ENCODE measurements at regions of chr12 and their contacts with region 1.

Region 1: DNA sequence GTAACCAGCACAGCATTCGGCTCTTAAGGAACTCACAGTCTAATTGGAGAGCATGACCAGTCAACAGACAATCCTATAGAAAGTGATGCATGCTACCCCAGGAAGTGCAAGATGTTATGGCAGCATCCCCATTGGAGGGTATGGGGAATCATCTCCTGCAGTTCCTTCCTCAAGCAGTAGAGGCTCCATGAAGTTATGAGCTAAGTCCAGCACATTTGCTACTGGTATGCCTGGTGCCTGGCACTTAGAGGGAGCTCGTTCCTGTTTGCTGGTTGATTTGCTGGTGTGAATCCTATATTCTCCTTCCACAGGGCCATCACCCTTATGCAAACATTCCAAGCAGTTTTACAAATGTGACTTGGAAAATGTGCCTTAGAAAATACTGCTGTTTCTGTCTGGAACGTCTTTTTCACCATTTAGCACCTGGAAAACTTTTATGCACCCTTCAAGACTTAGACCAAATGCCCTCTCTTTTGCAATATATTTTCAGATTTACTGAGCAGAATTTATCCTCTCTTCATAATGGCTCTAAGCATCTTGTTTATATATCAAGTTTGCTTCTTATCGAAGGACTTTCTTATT is 136.1 kb upstream of the WSCD2 start:
- DNase-seq: peak; percentile 22
- ATAC-seq: peak; percentile 91
- H3K4me3 ChIP-seq: no peak overlapping the region
- H3K27ac ChIP-seq: no peak overlapping the region
- H3K4me1 ChIP-seq: no peaks in the 10 kb centered on the region
- H3K27me3 ChIP-seq: peaks cover 2% of the 10 kb centered on the region; the same call in 1 of the 2 replicates
- CTCF ChIP-seq: peak; percentile 71

Region 2: GRCh38 chr12:107788690-107789458 is 204.1 kb before region 1 on chr12:
- CTCF ChIA-PET with region 1: no interaction called
- POLR2A ChIA-PET with region 1: no interaction called
- in situ Hi-C with region 1: no loop called
- intact Hi-C with region 1: no loop called
- DNase-seq: no peak
- ATAC-seq: no peak
- H3K4me3 ChIP-seq: no peak overlapping the region
- H3K27ac ChIP-seq: no peak overlapping the region
- H3K4me1 ChIP-seq: no peaks in the 10 kb centered on the region
- H3K27me3 ChIP-seq: peaks cover 3% of the 10 kb centered on the region; the same call in 1 of the 2 replicates
- CTCF ChIP-seq: no peak

Region 3: GRCh38 chr12:107978201-107978600 is 14.8 kb before region 1 on chr12:
- CTCF ChIA-PET with region 1: no interaction called
- POLR2A ChIA-PET with region 1: no interaction called
- in situ Hi-C with region 1: no loop called
- intact Hi-C with region 1: no loop called
- DNase-seq: no peak
- ATAC-seq: no peak
- H3K4me3 ChIP-seq: no peak overlapping the region
- H3K27ac ChIP-seq: no peak overlapping the region
- H3K4me1 ChIP-seq: no peaks in the 10 kb centered on the region
- H3K27me3 ChIP-seq: peaks cover 3% of the 10 kb centered on the region; the same call in 1 of the 2 replicates
- CTCF ChIP-seq: no peak

Region 4: DNA sequence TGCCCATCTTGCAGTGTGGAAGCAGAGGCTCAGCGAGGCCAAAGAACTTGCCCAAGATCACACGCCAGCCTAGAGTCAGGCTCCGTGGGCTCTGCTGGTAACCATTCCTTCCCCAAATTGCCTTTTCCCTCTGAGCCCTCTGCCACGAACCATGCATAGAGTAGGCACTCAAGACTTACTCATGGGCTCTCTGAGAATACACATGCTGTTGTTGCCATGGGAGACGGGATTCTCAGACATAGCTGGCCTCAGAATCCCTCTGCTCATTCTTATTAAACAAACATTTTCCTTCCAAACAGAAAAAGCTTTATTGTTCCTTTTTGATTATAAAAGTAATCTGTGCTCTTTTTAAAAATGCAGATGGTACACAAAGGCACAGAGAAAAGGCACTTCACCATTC is 83.6 kb after region 1 on chr12:
- CTCF ChIA-PET with region 1: no interaction called
- POLR2A ChIA-PET with region 1: no interaction called
- in situ Hi-C with region 1: no loop called
- intact Hi-C with region 1: no loop called
- DNase-seq: no peak
- ATAC-seq: no peak
- H3K4me3 ChIP-seq: no peak overlapping the region
- H3K27ac ChIP-seq: no peak overlapping the region
- H3K4me1 ChIP-seq: no peaks in the 10 kb centered on the region
- H3K27me3 ChIP-seq: no peaks in the 10 kb centered on the region
- CTCF ChIP-seq: no peak

Region 5: GRCh38 chr12:108270035-108270848 is 277.3 kb after region 1 on chr12:
- CTCF ChIA-PET with region 1: no interaction called
- POLR2A ChIA-PET with region 1: no interaction called
- in situ Hi-C with region 1: no loop called
- intact Hi-C with region 1: no loop called
- DNase-seq: no peak
- ATAC-seq: no peak
- H3K4me3 ChIP-seq: no peak overlapping the region
- H3K27ac ChIP-seq: no peak overlapping the region
- H3K4me1 ChIP-seq: no peaks in the 10 kb centered on the region
- H3K27me3 ChIP-seq: peaks cover 6% of the 10 kb centered on the region
- CTCF ChIP-seq: no peak

Region 6: GRCh38 chr12:108457006-108457733 is 464.2 kb after region 1 on chr12:
- CTCF ChIA-PET with region 1: no interaction called
- POLR2A ChIA-PET with region 1: no interaction called
- in situ Hi-C with region 1: no loop called
- intact Hi-C with region 1: loop called (anchors 10 kb)
- DNase-seq: peak; percentile 7
- ATAC-seq: peak; percentile 92
- H3K4me3 ChIP-seq: no peak overlapping the region
- H3K27ac ChIP-seq: no peak overlapping the region
- H3K4me1 ChIP-seq: no peaks in the 10 kb centered on the region
- H3K27me3 ChIP-seq: peaks cover 13% of the 10 kb centered on the region
- CTCF ChIP-seq: peak; percentile 82

Region 7: DNA sequence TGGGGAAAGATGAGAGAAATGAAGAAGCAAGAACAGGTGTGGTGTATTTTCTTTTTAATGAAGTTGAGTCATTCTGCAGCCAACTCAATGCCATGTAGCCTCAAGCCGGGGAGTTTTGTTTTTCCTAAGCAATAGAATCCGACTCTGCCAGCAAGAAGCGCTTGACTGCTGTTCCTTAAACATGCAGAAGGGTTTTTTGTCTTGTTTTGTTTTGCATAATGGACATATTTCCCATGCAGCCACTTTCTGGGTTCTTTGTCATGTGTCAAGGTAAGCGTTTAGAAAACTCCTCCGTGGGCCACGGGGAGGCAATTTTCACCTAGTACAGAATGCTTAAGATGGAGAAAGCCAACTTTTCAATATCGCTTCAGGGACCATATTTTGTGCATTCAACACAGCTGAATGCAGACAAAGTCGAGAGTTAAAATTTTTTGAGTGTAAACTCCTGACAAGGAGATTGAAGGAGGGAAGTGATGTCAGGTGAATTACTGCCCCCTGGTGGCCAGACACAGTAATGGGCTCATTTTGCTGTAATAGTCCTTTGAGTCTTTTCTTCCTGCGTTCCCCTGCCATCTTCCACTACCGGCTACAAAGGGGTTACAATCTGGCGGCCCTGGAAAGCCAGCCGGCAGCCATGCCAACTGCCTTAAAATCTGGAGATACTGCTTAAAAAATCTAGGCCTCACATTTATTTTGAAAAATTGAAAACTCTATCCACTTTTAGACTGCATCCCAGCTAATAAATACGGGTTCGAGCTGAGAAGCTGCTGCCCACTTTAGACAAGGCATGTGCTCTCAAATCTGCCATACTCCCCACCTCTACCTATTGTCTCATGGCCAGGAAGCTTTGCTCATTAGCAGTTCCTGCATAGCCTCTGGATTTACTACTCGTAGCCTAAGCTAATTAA is 518.9 kb after region 1 on chr12:
- CTCF ChIA-PET with region 1: interaction called, 3 read pairs
- POLR2A ChIA-PET with region 1: no interaction called
- in situ Hi-C with region 1: no loop called
- intact Hi-C with region 1: loop called (anchors 1 kb)
- DNase-seq: peak; percentile 61
- ATAC-seq: no peak; the same call in 1 of the 2 replicates
- H3K4me3 ChIP-seq: no peak overlapping the region
- H3K27ac ChIP-seq: peak overlapping the region; percentile 32
- H3K4me1 ChIP-seq: peaks cover 13% of the 10 kb centered on the region
- H3K27me3 ChIP-seq: no peaks in the 10 kb centered on the region
- CTCF ChIP-seq: peak; percentile 90